HepG2 (cell line): ENCODE measurements at regions of chr9 and their contacts with region 1.

Region 1: DNA sequence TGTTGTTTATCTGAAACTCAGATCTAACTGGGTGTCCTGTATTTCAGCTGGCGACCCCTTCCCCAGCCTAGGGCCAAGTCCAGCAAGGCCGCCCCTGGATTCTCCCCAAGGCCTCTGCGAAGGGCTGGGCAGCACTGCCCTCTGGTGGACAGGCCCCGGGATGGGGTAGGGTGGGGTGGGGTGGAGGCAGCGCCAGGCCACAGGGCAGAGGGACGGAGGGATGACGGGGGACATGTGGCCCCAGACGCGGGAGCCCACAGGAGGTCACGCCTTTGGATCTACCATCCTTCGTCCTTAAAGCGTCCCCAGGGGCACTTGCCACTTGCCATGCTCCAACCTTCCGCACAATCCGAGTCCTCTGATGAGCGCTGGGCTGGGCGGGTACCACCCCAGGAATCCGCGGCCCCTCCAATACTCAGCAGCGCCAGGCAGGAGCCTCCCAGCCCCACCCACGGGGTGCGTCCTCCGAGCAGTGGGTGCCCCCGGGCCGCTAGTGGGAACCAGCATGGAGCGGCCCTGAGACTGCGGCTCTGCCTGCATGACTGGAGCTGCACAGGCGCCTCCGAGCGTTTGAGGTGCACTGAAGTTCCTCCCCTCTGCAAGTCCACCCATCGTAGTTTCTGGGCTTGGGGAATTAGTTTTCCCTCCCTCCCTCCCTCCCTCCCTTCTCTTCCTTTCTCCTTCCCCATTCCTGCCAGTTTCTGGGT is 7.1 kb upstream of the AGPAT2 start:
- DNase-seq: peak; percentile 33
- ATAC-seq: peak; percentile 68
- H3K4me3 ChIP-seq: peak overlapping the region in 1 of 3 experiments; percentile 32; a peak in 1 of 6 replicates
- H3K27ac ChIP-seq: no peak overlapping the region
- H3K4me1 ChIP-seq: peaks cover 78% of the 10 kb centered on the region
- H3K27me3 ChIP-seq: peaks cover 18 to 50% of the 10 kb centered on the region in 2 experiments; a peak in 4 of 5 replicates
- CTCF ChIP-seq: peak; percentile 84
- EP300 ChIP-seq: no peak
- POLR2A ChIP-seq: no peak
- RAD21 ChIP-seq: peak; percentile 80

Region 2: DNA sequence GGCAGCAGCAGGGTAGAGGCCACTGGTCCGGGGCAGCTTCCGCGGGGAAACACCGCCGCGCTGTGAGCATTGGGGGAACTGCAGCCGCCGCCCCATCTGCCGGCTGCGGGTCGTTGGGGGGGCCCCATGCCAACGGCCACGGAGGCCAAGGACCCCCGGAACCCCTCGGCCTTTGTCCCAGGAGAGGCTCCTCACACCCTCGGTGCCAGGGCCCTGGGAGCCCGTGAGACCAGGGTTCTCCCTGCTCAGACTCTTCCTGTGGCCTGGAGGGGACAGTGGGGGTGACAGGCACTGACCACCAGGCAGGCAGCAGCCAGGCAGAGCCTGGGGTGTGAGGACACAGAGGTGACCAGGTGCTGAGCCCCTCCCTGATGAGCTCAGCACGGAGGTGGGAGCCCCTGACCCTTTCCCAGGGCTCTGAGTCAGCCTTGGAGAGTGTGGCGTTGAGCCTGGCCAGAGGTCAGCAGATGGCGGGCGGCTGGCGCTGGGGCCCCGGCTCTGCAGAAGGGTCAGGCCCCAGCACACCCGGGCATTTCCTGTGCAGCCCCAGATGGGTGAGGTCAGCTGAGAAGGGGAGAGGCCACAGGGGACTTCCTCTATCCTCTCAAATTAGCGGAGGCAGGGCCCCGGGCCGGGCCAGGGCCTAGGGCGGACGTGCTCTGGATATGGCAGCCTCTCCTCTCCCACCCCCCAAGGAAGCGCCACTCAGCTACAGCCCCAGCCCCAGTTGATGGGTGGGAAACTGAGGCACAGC is 49.6 kb before region 1 on chr9:
- CTCF ChIA-PET with region 1: interaction called, 3 read pairs
- POLR2A ChIA-PET with region 1: no interaction called
- in situ Hi-C with region 1: no loop called
- intact Hi-C with region 1: loop called (anchors 5 kb)
- DNase-seq: peak; percentile 31
- ATAC-seq: peak; percentile 71
- H3K4me3 ChIP-seq: peak overlapping the region; percentile 44 to 67 (median 51); a peak in 5 of 6 replicates
- H3K27ac ChIP-seq: peak overlapping the region; percentile 60
- H3K4me1 ChIP-seq: peaks cover 40% of the 10 kb centered on the region
- H3K27me3 ChIP-seq: peaks cover 3 to 37% of the 10 kb centered on the region in 2 experiments
- CTCF ChIP-seq: peak; percentile 91
- EP300 ChIP-seq: no peak
- POLR2A ChIP-seq: peak in 1 of 2 experiments; percentile 56; a peak in 2 of 4 replicates
- RAD21 ChIP-seq: peak; percentile 72

Region 3: DNA sequence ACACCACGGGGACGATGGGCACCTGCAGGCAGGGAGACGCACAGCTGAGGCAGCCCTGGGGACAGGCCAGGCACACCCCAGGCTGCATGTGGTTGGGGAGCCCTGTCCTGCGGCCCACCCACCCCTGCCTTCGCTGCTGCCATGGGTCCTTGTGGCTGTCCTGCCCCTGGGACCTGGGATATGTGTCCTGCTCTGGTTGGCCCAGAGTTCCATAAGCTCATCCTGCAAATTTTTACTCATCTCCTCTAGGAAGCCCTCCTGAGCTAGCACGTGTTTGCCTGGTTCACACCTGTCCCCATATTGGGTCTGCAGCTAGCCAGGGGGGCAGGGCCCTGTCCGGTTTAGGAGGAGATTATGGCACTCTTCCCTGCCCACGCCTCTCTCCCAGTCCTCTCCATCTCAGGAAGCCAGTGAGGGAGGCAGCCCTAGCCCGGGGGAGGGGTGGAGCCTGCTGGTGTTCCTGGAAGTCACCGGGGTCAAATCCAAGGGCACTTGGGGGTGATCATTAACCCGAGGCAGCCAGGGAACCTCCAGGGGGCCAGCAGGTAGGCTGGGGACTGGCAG is 19.5 kb before region 1 on chr9:
- CTCF ChIA-PET with region 1: interaction called, 3 read pairs
- POLR2A ChIA-PET with region 1: interaction called, 8 read pairs
- in situ Hi-C with region 1: no loop called
- intact Hi-C with region 1: loop called (anchors 1 kb)
- DNase-seq: peak; percentile 82
- ATAC-seq: peak; percentile 72
- H3K4me3 ChIP-seq: no peak overlapping the region
- H3K27ac ChIP-seq: no peak overlapping the region
- H3K4me1 ChIP-seq: peaks cover 69% of the 10 kb centered on the region
- H3K27me3 ChIP-seq: peaks cover 7 to 16% of the 10 kb centered on the region in 2 experiments; a peak in 3 of 5 replicates
- CTCF ChIP-seq: no peak
- EP300 ChIP-seq: peak in 1 of 2 experiments; percentile 58; a peak in 2 of 4 replicates
- POLR2A ChIP-seq: no peak
- RAD21 ChIP-seq: no peak

Region 4: DNA sequence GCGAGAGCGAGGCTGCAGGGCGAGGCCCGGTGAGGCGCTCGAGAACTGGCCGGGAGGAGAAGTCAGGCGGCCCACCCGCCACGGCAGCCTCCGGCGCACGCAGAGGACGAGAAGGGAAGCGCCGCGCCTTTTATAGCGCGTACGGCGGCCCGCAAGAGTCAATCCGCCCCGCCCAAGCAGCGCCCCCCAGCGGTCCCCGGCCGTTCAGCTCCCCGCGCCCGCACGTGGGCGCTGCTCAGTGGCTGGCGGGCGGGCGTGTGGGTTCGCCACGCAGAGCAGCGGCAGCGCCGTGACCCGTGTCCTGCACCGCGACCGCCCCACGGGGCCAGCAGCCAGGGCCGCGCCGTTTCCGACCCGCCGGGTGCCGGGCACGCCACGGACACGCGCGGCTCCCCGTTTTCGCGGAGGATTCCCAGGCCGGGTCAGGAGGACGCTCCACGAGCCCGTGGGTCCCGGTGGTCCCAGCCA is 33.7 kb after region 1 on chr9:
- CTCF ChIA-PET with region 1: no interaction called
- POLR2A ChIA-PET with region 1: interaction called, 30 read pairs
- in situ Hi-C with region 1: no loop called
- intact Hi-C with region 1: no loop called
- DNase-seq: peak; percentile 67
- ATAC-seq: peak; percentile 58
- H3K4me3 ChIP-seq: peak overlapping the region; percentile 75 to 89 (median 89)
- H3K27ac ChIP-seq: peak overlapping the region; percentile 64
- H3K4me1 ChIP-seq: peaks cover 56% of the 10 kb centered on the region
- H3K27me3 ChIP-seq: no peaks in the 10 kb centered on the region; a peak in 1 of 5 replicates
- CTCF ChIP-seq: peak; percentile 90
- EP300 ChIP-seq: 0 out of 4 replicates have a peak, but pooled peaks of 1 of the 2 experiments have one; percentile 24
- POLR2A ChIP-seq: peak in 1 of 2 experiments; percentile 99; a peak in 2 of 4 replicates
- RAD21 ChIP-seq: peak; percentile 77